ENCODE measurements at regions of chr19 and their contacts with region 1.

Region 1: DNA sequence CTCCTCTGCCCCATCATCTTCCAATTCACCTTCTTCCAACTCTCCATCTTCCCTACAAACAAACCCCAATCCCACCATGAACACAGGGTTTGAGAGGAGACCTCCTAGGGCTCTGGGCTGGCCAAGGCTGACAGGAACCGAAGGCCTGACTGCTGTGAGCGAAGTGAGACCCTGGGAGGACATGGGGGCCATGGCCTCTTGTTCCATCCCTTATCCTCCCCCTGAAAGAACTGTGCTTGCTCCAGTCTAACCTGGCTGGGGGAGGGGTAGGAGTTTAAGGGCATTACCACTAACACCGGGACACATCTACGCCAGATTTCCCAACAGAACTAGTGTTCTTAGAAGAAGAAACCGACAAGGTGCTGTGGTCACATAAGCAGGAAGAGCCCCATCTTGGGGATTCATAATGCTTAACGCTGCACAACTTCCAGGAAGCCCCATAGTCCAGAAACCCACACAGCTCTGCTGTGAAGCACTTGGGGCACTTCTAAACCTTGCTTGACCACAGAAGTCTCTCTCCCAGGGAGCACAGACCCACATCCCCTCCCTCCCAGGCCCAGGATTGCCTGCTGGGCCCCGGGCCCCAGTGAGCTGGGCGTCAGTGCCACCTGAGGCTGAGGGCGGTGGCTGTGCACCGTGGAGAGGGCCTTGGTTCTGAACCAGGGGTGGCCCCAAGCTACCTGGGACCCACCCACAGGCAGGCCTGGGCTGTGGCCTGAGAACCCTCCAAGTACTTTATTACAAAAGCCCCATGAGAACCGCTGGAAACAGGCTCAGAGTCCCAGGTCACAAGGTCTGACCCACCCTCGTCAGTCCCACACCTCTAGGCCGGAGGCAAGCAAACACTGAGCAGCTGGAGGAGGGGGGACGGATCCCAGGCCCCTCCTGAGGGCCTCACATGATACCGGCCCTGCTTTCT is 18.8 kb downstream of the ZC3H4 start:
- DNase-seq: peak; percentile 85
- ATAC-seq: peak; percentile 72
- H3K4me3 ChIP-seq: peak overlapping the region in 2 of 3 experiments; percentile 8 to 64; a peak in 3 of 6 replicates
- H3K27ac ChIP-seq: peak overlapping the region; percentile 91
- H3K4me1 ChIP-seq: peaks cover 63% of the 10 kb centered on the region
- H3K27me3 ChIP-seq: no peaks in the 10 kb centered on the region
- CTCF ChIP-seq: no peak
- EP300 ChIP-seq: peak in 1 of 2 experiments; percentile 65; a peak in 1 of 4 replicates
- POLR2A ChIP-seq: peak in 1 of 2 experiments; percentile 17; a peak in 1 of 4 replicates
- RAD21 ChIP-seq: no peak; the same call in 1 of the 2 replicates

Region 2: GRCh38 chr19:46732936-46733692 is 361.7 kb before region 1 on chr19:
- CTCF ChIA-PET with region 1: no interaction called
- POLR2A ChIA-PET with region 1: no interaction called
- in situ Hi-C with region 1: no loop called
- intact Hi-C with region 1: no loop called
- DNase-seq: no peak
- ATAC-seq: no peak
- H3K4me3 ChIP-seq: no peak overlapping the region
- H3K27ac ChIP-seq: no peak overlapping the region
- H3K4me1 ChIP-seq: no peaks in the 10 kb centered on the region
- H3K27me3 ChIP-seq: no peaks in the 10 kb centered on the region
- CTCF ChIP-seq: no peak
- EP300 ChIP-seq: no peak
- POLR2A ChIP-seq: no peak
- RAD21 ChIP-seq: no peak

Region 3: DNA sequence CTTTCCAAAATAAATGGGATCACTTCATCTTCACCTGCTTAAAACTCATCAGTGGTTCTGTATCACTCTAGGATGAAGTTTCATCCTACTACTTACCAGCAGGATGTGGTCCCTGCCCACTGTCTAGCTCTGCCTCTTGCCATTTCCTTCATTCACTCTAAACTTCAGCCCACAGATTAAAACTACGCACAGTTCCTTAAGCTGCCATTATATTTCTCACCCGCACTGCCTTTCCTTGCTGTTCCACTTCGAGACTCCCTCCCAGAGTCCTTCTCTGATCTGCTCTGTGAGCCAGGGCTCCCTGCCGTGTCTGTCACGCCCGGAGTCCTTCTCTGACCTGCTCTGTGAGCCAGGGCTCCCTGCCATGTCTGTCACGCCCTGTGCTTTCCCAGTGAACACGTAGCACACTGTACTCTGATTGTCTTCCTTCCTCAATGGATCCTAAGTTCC is 127.2 kb before region 1 on chr19:
- CTCF ChIA-PET with region 1: no interaction called
- POLR2A ChIA-PET with region 1: no interaction called
- in situ Hi-C with region 1: no loop called
- intact Hi-C with region 1: no loop called
- DNase-seq: no peak
- ATAC-seq: no peak
- H3K4me3 ChIP-seq: no peak overlapping the region
- H3K27ac ChIP-seq: no peak overlapping the region
- H3K4me1 ChIP-seq: peaks cover 6% of the 10 kb centered on the region
- H3K27me3 ChIP-seq: no peaks in the 10 kb centered on the region
- CTCF ChIP-seq: no peak
- EP300 ChIP-seq: no peak
- POLR2A ChIP-seq: no peak
- RAD21 ChIP-seq: no peak

Region 4: GRCh38 chr19:47081111-47081510 is 13.7 kb before region 1 on chr19:
- CTCF ChIA-PET with region 1: no interaction called
- POLR2A ChIA-PET with region 1: interaction called, 46 read pairs
- in situ Hi-C with region 1: no loop called
- intact Hi-C with region 1: no loop called
- DNase-seq: no peak
- ATAC-seq: no peak
- H3K4me3 ChIP-seq: no peak overlapping the region
- H3K27ac ChIP-seq: no peak overlapping the region
- H3K4me1 ChIP-seq: peaks cover 7% of the 10 kb centered on the region
- H3K27me3 ChIP-seq: no peaks in the 10 kb centered on the region
- CTCF ChIP-seq: no peak
- EP300 ChIP-seq: no peak
- POLR2A ChIP-seq: no peak
- RAD21 ChIP-seq: no peak

Region 5: DNA sequence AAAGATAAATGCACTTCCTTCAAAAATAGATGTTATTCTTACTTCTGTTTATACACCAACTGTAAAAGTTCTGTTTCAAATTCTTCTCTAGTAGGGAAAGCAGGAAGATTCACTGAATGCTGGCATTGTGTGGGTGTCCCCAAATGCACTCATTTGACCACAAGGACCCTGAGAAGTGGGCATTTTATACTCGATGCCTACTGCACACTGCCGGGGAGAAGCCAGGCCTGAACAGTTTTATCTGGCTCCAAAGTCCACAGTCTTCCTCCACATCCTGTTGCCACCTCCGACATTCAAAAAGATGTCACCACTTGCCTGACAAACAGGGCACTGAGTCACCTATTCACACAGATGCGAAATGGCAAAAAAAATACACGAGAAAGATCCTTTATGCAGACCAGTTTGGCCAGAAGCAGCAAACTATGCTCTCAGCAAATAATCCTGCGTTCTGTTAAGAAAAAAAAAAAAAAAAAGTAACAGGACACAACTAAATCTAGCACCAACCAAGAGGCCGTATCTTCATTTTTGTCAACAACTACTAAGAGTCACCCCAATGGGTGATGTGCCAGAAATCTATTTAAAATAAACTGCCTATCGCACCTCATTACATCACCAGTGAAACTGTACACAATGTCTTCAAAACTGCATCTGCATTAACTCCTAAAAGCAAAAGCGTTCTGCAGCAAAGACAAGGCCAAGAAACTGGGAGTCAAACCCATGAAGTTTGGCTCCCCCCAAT is 12.6 kb after region 1 on chr19:
- CTCF ChIA-PET with region 1: interaction called, 3 read pairs
- POLR2A ChIA-PET with region 1: interaction called, 456 read pairs
- in situ Hi-C with region 1: no loop called
- intact Hi-C with region 1: loop called (anchors 1 kb)
- DNase-seq: peak; percentile 93
- ATAC-seq: peak; percentile 81
- H3K4me3 ChIP-seq: peak overlapping the region in 2 of 3 experiments; percentile 5 to 18; a peak in 2 of 6 replicates
- H3K27ac ChIP-seq: peak overlapping the region; percentile 100
- H3K4me1 ChIP-seq: peaks cover 78% of the 10 kb centered on the region
- H3K27me3 ChIP-seq: no peaks in the 10 kb centered on the region; a peak in 1 of 5 replicates
- CTCF ChIP-seq: no peak
- EP300 ChIP-seq: peak in 1 of 2 experiments; percentile 71; a peak in 1 of 4 replicates
- POLR2A ChIP-seq: peak; percentile 26 to 39; a peak in 3 of 4 replicates
- RAD21 ChIP-seq: 0 out of 2 replicates have a peak, but pooled peaks have one; percentile 10

Region 6: GRCh38 chr19:47130591-47131227 is 35.9 kb after region 1 on chr19 and contains the start of gene SAE1:
- CTCF ChIA-PET with region 1: no interaction called
- POLR2A ChIA-PET with region 1: interaction called, 24 read pairs
- in situ Hi-C with region 1: no loop called
- intact Hi-C with region 1: no loop called
- DNase-seq: peak; percentile 97
- ATAC-seq: peak; percentile 90
- H3K4me3 ChIP-seq: peak within 1 kb of the TSS; percentile 78 to 87 (median 87)
- H3K27ac ChIP-seq: peak within 1 kb of the TSS; percentile 81
- H3K4me1 ChIP-seq: peaks cover 44% of the 10 kb centered on the region
- H3K27me3 ChIP-seq: no peaks in the 10 kb centered on the region; a peak in 1 of 5 replicates
- CTCF ChIP-seq: peak; percentile 90
- EP300 ChIP-seq: no peak
- POLR2A ChIP-seq: peak; percentile 45 to 81; a peak in 3 of 4 replicates
- RAD21 ChIP-seq: no peak; the same call in 1 of the 2 replicates
- total RNA-seq, gene SAE1: 197 and 250 TPM in 2 replicates

Region 7: DNA sequence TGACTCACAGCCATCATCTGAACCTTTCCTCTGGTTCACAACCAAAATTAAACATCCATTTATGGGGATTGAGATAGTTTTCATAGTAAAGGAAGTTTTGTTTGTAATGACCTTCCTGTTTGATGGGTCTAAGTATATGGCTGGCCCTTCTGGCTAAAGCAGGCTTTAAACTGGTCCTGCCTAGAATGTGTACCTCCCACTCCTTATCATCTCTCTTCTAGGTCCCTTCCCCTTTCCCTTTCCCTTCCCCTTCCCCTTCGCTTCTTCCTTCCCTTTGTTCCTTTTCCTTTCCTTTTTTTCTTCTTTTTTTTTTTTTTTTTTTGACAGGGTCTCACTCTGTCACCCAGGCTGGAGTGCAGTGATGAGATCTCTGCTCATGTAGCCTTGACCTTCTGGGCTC is 100.6 kb after region 1 on chr19:
- CTCF ChIA-PET with region 1: no interaction called
- POLR2A ChIA-PET with region 1: no interaction called
- in situ Hi-C with region 1: no loop called
- intact Hi-C with region 1: no loop called
- DNase-seq: no peak
- ATAC-seq: no peak
- H3K4me3 ChIP-seq: no peak overlapping the region
- H3K27ac ChIP-seq: no peak overlapping the region
- H3K4me1 ChIP-seq: peaks cover 13% of the 10 kb centered on the region
- H3K27me3 ChIP-seq: no peaks in the 10 kb centered on the region
- CTCF ChIP-seq: no peak
- EP300 ChIP-seq: no peak
- POLR2A ChIP-seq: no peak
- RAD21 ChIP-seq: no peak

Region 8: GRCh38 chr19:47256688-47257443 is 162.1 kb after region 1 on chr19:
- CTCF ChIA-PET with region 1: no interaction called
- POLR2A ChIA-PET with region 1: interaction called, 13 read pairs
- in situ Hi-C with region 1: no loop called
- intact Hi-C with region 1: no loop called
- DNase-seq: peak; percentile 95
- ATAC-seq: peak; percentile 78
- H3K4me3 ChIP-seq: peak overlapping the region; percentile 72 to 88 (median 88); a peak in 4 of 6 replicates
- H3K27ac ChIP-seq: peak overlapping the region; percentile 86
- H3K4me1 ChIP-seq: peaks cover 43% of the 10 kb centered on the region
- H3K27me3 ChIP-seq: no peaks in the 10 kb centered on the region
- CTCF ChIP-seq: no peak
- EP300 ChIP-seq: no peak
- POLR2A ChIP-seq: no peak
- RAD21 ChIP-seq: no peak

Measured in HepG2 (cell line).